Naive thymus-derived CD4-positive, alpha-beta T cell (primary cell): ENCODE measurements at regions of chr4 and their contacts with region 1.

Region 1: DNA sequence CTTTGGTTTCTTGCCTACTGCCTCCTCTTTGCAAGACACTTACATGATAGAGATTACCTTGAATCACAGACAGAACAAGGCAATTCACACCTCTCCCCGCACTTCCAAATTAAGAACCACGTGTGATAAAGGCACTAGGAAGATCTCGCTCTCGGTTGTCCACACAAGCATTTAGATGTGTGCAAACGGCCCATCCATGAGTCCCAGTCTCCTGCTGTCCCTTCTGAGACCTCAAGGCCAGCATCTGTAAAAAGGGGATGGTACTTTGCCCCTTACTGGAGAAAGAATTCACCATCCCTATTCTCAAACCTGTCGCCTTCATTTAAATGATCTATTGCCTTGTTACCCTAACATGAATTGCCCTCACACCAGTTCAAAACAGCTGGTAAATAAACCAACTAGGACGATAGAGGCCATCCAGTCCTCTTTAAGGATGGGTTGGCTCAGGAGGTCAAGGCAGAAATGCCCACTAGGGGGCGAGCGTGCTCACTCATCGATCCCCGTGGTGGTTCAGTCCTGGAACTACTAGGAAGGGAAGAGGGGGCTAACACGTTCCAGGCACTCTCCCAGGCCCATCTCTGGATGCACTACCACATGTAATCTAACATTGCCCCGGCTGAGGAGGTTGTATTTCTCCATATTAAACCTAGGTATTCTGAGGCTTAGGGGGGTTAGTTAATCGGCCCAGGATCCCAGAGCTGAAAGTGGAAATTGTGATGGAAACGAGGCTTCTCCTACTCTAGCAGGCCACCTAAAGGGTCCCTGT is 95.8 kb downstream of the DHX15 start:
- DNase-seq: peak in 3 of 9 donors; percentile 9 to 70 (median 34)
- ATAC-seq: peak; percentile 61
- H3K4me3 ChIP-seq: no peak overlapping the region
- H3K4me3 Mint-ChIP-seq: no peak overlapping the region
- H3K27ac ChIP-seq: no peak overlapping the region
- H3K27ac Mint-ChIP-seq: no peak overlapping the region
- H3K4me1 ChIP-seq: no peaks in the 10 kb centered on the region
- H3K4me1 Mint-ChIP-seq: peaks cover 0 to 4% (median 0%) of the 10 kb centered on the region in 7 donors
- H3K27me3 ChIP-seq: no peaks in the 10 kb centered on the region
- H3K27me3 Mint-ChIP-seq: peaks cover 8 to 33% (median 21%) of the 10 kb centered on the region in 5 donors

Region 2: GRCh38 chr4:24557026-24558025 is 68.7 kb after region 1 on chr4:
- CTCF ChIA-PET with region 1: no interaction called
- POLR2A ChIA-PET with region 1: no interaction called
- intact Hi-C with region 1: loop called in 1 of 2 experiments (anchors 2 kb)
- DNase-seq: peak in 5 of 9 donors; percentile 2 to 22 (median 14)
- ATAC-seq: peak; percentile 63
- H3K4me3 ChIP-seq: no peak overlapping the region
- H3K4me3 Mint-ChIP-seq: peak overlapping the region; percentile 16 to 74 (median 65)
- H3K27ac ChIP-seq: peak overlapping the region; percentile 5
- H3K27ac Mint-ChIP-seq: peak overlapping the region in 8 of 9 donors; percentile 3 to 77 (median 28)
- H3K4me1 ChIP-seq: peaks cover 9 to 13% of the 10 kb centered on the region in 2 donors
- H3K4me1 Mint-ChIP-seq: peaks cover 31 to 80% (median 69%) of the 10 kb centered on the region in 7 donors
- H3K27me3 ChIP-seq: no peaks in the 10 kb centered on the region
- H3K27me3 Mint-ChIP-seq: no peaks in the 10 kb centered on the region

Region 3: GRCh38 chr4:24686871-24687680 is 198.5 kb after region 1 on chr4:
- CTCF ChIA-PET with region 1: no interaction called
- POLR2A ChIA-PET with region 1: no interaction called
- intact Hi-C with region 1: loop called in 1 of 2 experiments (anchors 1 kb)
- DNase-seq: peak in 1 of 9 donors; percentile 38
- ATAC-seq: no peak
- H3K4me3 ChIP-seq: no peak overlapping the region
- H3K4me3 Mint-ChIP-seq: no peak overlapping the region
- H3K27ac ChIP-seq: no peak overlapping the region
- H3K27ac Mint-ChIP-seq: no peak overlapping the region
- H3K4me1 ChIP-seq: no peaks in the 10 kb centered on the region
- H3K4me1 Mint-ChIP-seq: peaks cover 0 to 3% (median 0%) of the 10 kb centered on the region in 7 donors
- H3K27me3 ChIP-seq: no peaks in the 10 kb centered on the region
- H3K27me3 Mint-ChIP-seq: peaks cover 6 to 31% (median 20%) of the 10 kb centered on the region in 5 donors

Region 4: GRCh38 chr4:25051534-25051933 is 563.0 kb after region 1 on chr4:
- CTCF ChIA-PET with region 1: no interaction called
- POLR2A ChIA-PET with region 1: no interaction called
- intact Hi-C with region 1: no loop called
- DNase-seq: no peak
- ATAC-seq: no peak
- H3K4me3 ChIP-seq: no peak overlapping the region
- H3K4me3 Mint-ChIP-seq: no peak overlapping the region
- H3K27ac ChIP-seq: no peak overlapping the region
- H3K27ac Mint-ChIP-seq: no peak overlapping the region
- H3K4me1 ChIP-seq: no peaks in the 10 kb centered on the region
- H3K4me1 Mint-ChIP-seq: no peaks in the 10 kb centered on the region
- H3K27me3 ChIP-seq: no peaks in the 10 kb centered on the region
- H3K27me3 Mint-ChIP-seq: peaks cover 8 to 33% (median 21%) of the 10 kb centered on the region in 5 donors

Region 5: DNA sequence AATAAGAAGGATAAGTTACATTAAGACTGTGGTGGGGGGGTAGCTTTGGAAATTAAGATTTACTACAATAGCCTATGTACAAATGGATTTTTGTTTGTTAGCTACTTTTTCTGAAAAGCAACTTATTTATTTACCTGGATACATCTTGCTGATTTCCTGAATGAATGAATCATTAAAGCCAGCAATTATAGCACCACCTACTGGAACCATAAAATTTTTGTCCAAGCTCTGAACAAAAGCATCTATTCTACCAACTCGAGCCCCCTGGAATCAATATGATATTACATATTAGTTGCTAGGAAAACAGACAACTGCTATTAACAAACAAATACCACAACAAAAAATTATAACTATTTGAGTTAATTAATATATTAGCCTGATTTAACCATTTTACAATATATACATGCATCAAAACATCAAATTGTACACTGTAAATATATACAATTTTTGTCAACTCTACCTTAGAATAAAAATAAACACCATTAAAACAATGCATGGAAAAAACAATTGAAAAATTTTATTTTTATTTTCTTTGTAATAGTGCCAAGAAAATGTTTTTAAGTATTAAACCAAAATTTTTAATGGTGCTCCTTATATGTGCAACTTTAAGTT is 656.4 kb after region 1 on chr4:
- CTCF ChIA-PET with region 1: no interaction called
- POLR2A ChIA-PET with region 1: no interaction called
- intact Hi-C with region 1: loop called in 1 of 2 experiments (anchors 10 kb)
- DNase-seq: peak in 3 of 9 donors; percentile 2 to 8 (median 3)
- ATAC-seq: no peak
- H3K4me3 ChIP-seq: no peak overlapping the region
- H3K4me3 Mint-ChIP-seq: no peak overlapping the region
- H3K27ac ChIP-seq: no peak overlapping the region
- H3K27ac Mint-ChIP-seq: no peak overlapping the region
- H3K4me1 ChIP-seq: no peaks in the 10 kb centered on the region
- H3K4me1 Mint-ChIP-seq: peaks cover 0 to 13% (median 0%) of the 10 kb centered on the region in 7 donors
- H3K27me3 ChIP-seq: no peaks in the 10 kb centered on the region
- H3K27me3 Mint-ChIP-seq: no peaks in the 10 kb centered on the region